ENCODE measurements at regions of chr7 and their contacts with region 1.

Region 1: GRCh38 chr7:131076032-131076431 is 251.6 kb upstream of the MKLN1 start:
- DNase-seq: no peak
- ATAC-seq: no peak
- H3K4me3 ChIP-seq: no peak overlapping the region
- H3K27ac ChIP-seq: peak overlapping the region; percentile 12 to 67 (median 37)
- H3K4me1 ChIP-seq: peaks cover 91 to 93% of the 10 kb centered on the region in 2 donors
- H3K27me3 ChIP-seq: no peaks in the 10 kb centered on the region
- CTCF ChIP-seq: no peak
- POLR2A ChIP-seq: no peak

Region 2: GRCh38 chr7:131090886-131091692 is 15.1 kb after region 1 on chr7:
- in situ Hi-C with region 1: no loop called
- intact Hi-C with region 1: no loop called
- DNase-seq: no peak
- ATAC-seq: peak in 1 of 2 donors; percentile 12
- H3K4me3 ChIP-seq: peak overlapping the region in 1 of 4 donors; percentile 12
- H3K27ac ChIP-seq: peak overlapping the region; percentile 62 to 80 (median 77)
- H3K4me1 ChIP-seq: peaks cover 87 to 88% of the 10 kb centered on the region in 2 donors
- H3K27me3 ChIP-seq: no peaks in the 10 kb centered on the region
- CTCF ChIP-seq: no peak
- POLR2A ChIP-seq: no peak

Region 3: DNA sequence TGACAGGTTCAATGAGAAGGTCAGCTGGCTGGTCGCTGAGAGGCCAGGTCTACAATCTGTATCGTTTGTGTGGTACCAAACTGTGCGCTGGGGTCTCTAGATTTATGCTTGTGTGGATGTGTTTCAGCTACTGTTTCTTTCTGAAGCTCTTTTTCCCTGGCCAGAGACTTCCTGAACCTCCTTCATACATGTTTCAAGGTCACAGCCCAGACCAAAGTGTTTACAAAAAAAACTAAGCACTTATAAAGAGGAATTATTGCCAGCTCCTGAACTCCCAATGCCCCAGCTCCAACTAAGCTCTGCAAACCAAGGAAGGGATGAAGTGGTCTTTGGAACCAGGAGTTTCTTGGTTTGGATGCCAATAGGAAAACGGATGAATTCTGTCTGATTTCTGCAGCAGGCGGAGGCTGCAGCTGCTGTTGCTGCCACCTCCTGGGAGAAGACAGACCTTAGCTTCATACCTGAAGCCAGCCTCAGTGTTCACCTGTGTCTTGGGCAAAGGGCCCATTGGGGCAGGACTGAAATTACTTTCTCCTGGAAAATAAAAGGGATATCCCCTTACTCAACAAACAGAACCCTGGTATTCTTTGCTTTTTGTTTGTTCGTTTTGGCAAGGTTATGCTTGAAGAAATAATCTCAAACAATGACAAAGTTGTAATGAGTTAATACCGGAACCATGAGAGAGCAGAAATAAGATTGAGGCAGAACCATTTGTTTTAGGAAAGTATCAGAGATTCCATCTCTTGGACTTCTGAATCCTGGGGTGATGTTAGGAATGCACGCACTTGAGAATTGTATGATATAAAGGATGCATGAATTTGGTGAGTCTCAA is 227.1 kb after region 1 on chr7:
- in situ Hi-C with region 1: loop called in 1 of 4 experiments (anchors 25 kb)
- intact Hi-C with region 1: no loop called
- DNase-seq: peak in 1 of 2 donors; percentile 45
- ATAC-seq: peak; percentile 16 to 53
- H3K4me3 ChIP-seq: no peak overlapping the region
- H3K27ac ChIP-seq: peak overlapping the region in 3 of 4 donors; percentile 40 to 71 (median 66)
- H3K4me1 ChIP-seq: peaks cover 39 to 50% of the 10 kb centered on the region in 2 donors
- H3K27me3 ChIP-seq: no peaks in the 10 kb centered on the region
- CTCF ChIP-seq: peak; percentile 44 to 72 (median 52)
- POLR2A ChIP-seq: no peak

Region 4: DNA sequence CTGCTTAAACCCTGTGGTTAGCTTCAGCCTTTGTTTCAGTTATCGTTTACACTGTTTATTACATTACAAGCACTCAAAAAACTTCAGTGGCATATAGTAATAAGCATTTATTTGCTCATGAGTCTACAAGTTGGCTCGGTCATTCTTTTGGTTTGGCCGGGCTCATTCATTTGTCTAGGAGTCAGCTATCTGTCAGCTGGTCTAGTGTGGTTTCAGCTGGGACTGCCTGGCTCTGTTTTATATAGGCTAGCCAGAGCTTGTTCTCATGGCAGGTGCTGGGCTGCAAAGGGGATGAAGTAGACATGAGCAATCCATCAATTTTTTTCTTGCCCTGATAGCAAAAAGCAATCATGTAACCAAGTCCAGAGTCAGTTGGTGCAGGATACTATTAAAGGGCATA is 355.3 kb after region 1 on chr7:
- in situ Hi-C with region 1: loop called in 1 of 4 experiments (anchors 25 kb)
- intact Hi-C with region 1: no loop called
- DNase-seq: peak; percentile 79 to 82
- ATAC-seq: peak; percentile 95 to 96
- H3K4me3 ChIP-seq: no peak overlapping the region
- H3K27ac ChIP-seq: peak overlapping the region; percentile 57 to 88 (median 79)
- H3K4me1 ChIP-seq: peaks cover 15 to 28% of the 10 kb centered on the region in 2 donors
- H3K27me3 ChIP-seq: no peaks in the 10 kb centered on the region
- CTCF ChIP-seq: no peak
- POLR2A ChIP-seq: no peak

Measured in gastrocnemius medialis (tissue), 4 donors.